ENCODE measurements at regions of chr5 and their contacts with region 1.

Region 1: DNA sequence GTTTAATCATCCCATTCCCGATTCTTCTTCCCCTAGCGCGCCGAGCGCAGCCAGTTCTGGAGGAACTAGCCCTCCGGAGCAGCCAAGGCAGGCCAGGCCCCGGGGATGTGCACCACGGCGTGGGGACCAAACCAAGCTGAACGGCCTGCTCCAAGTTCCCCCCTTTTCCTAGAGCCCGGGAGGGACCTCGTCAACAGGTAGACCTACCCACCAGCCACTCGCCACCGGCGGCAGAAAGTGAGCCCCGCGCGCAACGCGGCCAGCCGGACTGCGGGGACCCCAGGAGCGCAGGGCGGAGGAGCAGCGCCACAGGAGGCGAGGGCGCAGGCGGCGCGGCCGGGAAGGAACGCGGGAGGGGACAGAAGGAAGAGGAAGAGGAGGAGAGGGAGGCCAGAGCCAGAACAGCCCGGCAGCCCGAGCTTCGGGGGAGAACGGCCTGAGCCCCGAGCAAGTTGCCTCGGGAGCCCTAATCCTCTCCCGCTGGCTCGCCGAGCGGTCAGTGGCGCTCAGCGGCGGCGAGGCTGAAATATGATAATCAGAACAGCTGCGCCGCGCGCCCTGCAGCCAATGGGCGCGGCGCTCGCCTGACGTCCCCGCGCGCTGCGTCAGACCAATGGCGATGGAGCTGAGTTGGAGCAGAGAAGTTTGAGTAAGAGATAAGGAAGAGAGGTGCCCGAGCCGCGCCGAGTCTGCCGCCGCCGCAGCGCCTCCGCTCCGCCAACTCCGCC is at the start of gene ISL1:
- DNase-seq: peak; percentile 77
- H3K4me3 ChIP-seq: peak within 1 kb of the TSS; percentile 7 to 48 (median 36)
- H3K27ac ChIP-seq: no peak within 1 kb of the TSS
- H3K4me1 ChIP-seq: peaks cover 17% of the 10 kb centered on the region
- H3K27me3 ChIP-seq: peaks cover 65% of the 10 kb centered on the region
- CTCF ChIP-seq: no peak
- total RNA-seq, gene ISL1: 0.28 TPM in 1 of 2 donors, not detected in the other

Region 2: GRCh38 chr5:51416149-51416548 is 33.2 kb after region 1 on chr5:
- CTCF ChIA-PET with region 1: no interaction called
- dilution Hi-C with region 1: no loop called
- in situ Hi-C with region 1: no loop called
- intact Hi-C with region 1: no loop called
- DNase-seq: no peak
- H3K4me3 ChIP-seq: no peak overlapping the region
- H3K27ac ChIP-seq: no peak overlapping the region
- H3K4me1 ChIP-seq: no peaks in the 10 kb centered on the region
- H3K27me3 ChIP-seq: no peaks in the 10 kb centered on the region
- CTCF ChIP-seq: peak in 1 of 2 donors; percentile 7

Region 3: DNA sequence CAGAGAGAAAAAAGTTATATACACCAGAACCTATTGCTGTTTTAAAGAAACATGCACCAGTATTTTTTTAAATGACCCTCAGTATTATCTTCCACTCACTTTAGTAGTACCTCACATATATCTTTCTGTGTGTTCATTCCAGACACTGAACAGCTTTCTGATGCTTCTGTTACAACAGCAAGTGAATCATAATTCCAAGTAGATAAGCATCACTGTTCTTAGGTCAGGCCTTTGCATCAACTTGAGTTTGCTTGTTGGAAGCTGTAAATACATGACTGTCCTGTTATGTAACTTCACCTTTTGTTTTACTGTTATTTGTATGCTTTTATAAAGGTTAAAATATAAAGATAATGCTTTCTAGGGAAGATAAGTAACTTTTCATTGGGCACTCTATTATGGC is 184.7 kb after region 1 on chr5:
- CTCF ChIA-PET with region 1: no interaction called
- dilution Hi-C with region 1: no loop called
- in situ Hi-C with region 1: no loop called
- intact Hi-C with region 1: loop called (anchors 10 kb)
- DNase-seq: peak; percentile 71
- H3K4me3 ChIP-seq: no peak overlapping the region
- H3K27ac ChIP-seq: no peak overlapping the region
- H3K4me1 ChIP-seq: no peaks in the 10 kb centered on the region
- H3K27me3 ChIP-seq: peaks cover 3% of the 10 kb centered on the region
- CTCF ChIP-seq: no peak

Region 4: GRCh38 chr5:51684794-51685355 is 301.9 kb after region 1 on chr5:
- CTCF ChIA-PET with region 1: no interaction called
- dilution Hi-C with region 1: no loop called
- in situ Hi-C with region 1: no loop called
- intact Hi-C with region 1: loop called (anchors 2 kb)
- DNase-seq: no peak
- H3K4me3 ChIP-seq: no peak overlapping the region
- H3K27ac ChIP-seq: no peak overlapping the region
- H3K4me1 ChIP-seq: no peaks in the 10 kb centered on the region
- H3K27me3 ChIP-seq: no peaks in the 10 kb centered on the region
- CTCF ChIP-seq: peak; percentile 43 to 63

Region 5: GRCh38 chr5:51846015-51846414 is 463.1 kb after region 1 on chr5:
- CTCF ChIA-PET with region 1: interaction called, 4 read pairs
- dilution Hi-C with region 1: no loop called
- in situ Hi-C with region 1: no loop called
- intact Hi-C with region 1: loop called (anchors 1 kb)
- DNase-seq: peak; percentile 33
- H3K4me3 ChIP-seq: no peak overlapping the region
- H3K27ac ChIP-seq: no peak overlapping the region
- H3K4me1 ChIP-seq: no peaks in the 10 kb centered on the region
- H3K27me3 ChIP-seq: no peaks in the 10 kb centered on the region
- CTCF ChIP-seq: no peak

Region 6: DNA sequence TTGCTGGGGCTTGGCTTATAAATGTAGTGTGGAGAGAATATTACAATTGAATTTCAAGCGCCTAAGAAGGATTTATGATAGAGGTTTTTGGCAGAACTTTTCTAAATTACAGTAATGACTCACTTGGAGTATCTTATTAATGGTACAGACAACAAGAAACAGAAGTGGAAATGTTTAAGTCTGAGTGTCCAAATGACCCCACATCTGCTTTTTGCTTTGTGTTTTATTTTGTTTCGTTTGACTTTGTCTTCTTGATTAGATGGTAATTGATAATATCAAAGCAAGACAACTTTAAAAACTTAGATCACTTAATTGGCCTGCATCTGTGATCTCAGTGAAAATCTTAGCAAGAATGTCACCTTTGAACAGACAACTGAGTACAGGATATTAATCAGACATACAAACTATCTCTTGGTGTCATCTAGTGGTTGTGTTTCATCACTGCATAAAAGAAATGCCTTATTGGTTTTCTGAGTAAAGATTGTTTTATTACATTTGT is 577.7 kb after region 1 on chr5:
- CTCF ChIA-PET with region 1: no interaction called
- dilution Hi-C with region 1: no loop called
- in situ Hi-C with region 1: no loop called
- intact Hi-C with region 1: loop called (anchors 5 kb)
- DNase-seq: peak; percentile 17
- H3K4me3 ChIP-seq: no peak overlapping the region
- H3K27ac ChIP-seq: no peak overlapping the region
- H3K4me1 ChIP-seq: no peaks in the 10 kb centered on the region
- H3K27me3 ChIP-seq: no peaks in the 10 kb centered on the region
- CTCF ChIP-seq: peak; percentile 77 to 80

Region 7: DNA sequence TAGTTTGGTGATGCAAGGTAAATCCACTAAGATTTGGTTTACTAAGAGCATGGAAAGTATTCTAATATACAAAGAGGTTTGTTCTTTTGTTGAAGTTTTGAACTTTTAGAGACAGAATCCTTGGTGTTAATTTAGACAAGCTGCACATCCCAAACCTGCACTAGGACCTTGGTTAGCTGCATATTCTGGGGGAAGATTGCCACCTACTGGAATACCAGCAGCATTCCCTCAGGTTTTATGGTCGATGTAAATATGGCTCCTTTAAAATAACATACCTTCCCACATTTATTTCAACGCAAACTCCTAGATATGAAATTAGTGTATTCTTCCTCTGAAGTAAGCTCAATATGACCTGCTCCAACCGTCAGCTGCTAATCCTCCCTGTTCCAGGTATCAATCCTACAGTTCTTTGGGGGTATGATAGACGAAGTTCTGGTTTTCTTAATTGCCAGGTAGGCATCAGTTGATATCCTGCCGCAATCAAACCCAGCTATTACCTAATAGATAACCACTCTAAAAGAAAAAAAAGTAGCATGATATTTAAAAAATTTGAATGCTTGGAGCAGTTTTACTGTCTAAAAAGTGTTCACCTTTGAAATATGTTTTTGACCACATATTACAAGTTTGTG is 624.4 kb after region 1 on chr5:
- CTCF ChIA-PET with region 1: no interaction called
- dilution Hi-C with region 1: no loop called
- in situ Hi-C with region 1: no loop called
- intact Hi-C with region 1: loop called (anchors 5 kb)
- DNase-seq: peak; percentile 33
- H3K4me3 ChIP-seq: no peak overlapping the region
- H3K27ac ChIP-seq: no peak overlapping the region
- H3K4me1 ChIP-seq: no peaks in the 10 kb centered on the region
- H3K27me3 ChIP-seq: peaks cover 3% of the 10 kb centered on the region
- CTCF ChIP-seq: peak; percentile 83 to 87

Measured in mammary epithelial cell (primary cell).